AG04450 (cell line): ENCODE measurements at regions of chr11 and their contacts with region 1.

Region 1: DNA sequence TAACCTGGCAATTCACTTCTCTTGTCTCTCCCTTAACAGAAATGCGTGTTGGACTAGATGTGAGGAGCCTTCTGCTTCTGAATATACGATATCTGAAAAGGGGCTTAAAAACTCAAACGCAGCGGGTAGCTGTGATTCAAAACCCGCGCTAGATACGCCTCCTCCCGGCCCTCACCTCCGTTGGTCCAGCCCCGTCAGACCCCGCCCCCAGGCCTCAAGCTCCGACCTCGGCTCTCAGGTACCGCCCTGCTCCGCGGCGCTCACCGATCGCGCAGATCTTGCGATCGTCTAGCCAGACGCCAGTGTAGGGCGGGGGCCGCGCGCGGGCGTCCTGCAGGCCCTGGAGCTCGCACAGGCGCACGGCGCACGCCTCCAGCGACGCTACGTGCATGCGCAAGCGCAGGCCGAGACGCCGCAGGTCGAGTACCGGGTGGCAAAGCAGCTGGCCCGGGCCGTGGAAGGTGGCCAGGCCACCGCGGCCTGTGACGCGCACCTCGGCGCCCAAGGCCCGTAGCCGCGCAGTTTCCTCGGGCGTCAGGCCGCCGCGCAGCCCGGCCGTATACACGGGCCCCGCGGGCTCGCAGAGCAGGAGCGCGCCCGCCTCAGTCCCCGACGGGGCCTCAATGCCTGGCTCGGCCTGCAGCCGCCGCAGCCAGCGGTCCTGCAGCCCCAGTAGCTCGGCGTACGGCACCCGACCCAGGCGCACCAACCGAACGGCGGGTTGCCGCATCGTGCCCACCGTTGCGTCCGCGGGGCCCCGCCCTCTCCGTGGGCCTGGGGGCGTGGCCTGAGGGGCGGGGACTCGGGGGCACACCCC is at the start of gene LIPT2:
- DNase-seq: peak; percentile 87
- H3K4me3 ChIP-seq: peak within 1 kb of the TSS; percentile 70
- H3K27ac ChIP-seq: no peak within 1 kb of the TSS
- H3K27me3 ChIP-seq: no peaks in the 10 kb centered on the region
- CTCF ChIP-seq: no peak
- polyA plus RNA-seq, gene LIPT2: 2.1 TPM in 2 replicates

Region 2: DNA sequence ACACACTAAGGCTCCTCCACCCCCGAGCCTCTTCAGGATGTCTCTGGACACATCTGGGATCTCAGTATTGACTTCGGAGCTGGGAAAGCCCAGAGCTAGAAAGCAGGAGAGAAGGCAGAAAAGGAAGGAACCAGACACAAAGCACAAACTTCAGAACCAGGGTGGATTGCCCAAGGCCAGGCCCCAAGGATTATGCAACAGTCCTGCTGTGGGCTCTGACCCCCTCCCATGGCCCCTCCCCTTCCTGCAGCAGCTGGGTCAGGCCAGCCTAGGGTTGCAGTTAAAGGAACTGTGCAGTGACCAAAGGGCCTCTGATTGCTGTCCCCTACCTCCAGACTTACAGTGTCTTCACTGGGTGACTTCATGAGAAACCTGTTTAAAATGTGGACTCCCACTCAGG is 31.2 kb before region 1 on chr11:
- CTCF ChIA-PET with region 1: no interaction called
- POLR2A ChIA-PET with region 1: interaction called, 11 read pairs
- DNase-seq: no peak
- H3K4me3 ChIP-seq: no peak overlapping the region
- H3K27ac ChIP-seq: no peak overlapping the region
- H3K27me3 ChIP-seq: peaks cover 38% of the 10 kb centered on the region
- CTCF ChIP-seq: no peak